CD8-positive, alpha-beta T cell (primary cell): ENCODE measurements at regions of chr7 and their contacts with region 1.

Region 1: DNA sequence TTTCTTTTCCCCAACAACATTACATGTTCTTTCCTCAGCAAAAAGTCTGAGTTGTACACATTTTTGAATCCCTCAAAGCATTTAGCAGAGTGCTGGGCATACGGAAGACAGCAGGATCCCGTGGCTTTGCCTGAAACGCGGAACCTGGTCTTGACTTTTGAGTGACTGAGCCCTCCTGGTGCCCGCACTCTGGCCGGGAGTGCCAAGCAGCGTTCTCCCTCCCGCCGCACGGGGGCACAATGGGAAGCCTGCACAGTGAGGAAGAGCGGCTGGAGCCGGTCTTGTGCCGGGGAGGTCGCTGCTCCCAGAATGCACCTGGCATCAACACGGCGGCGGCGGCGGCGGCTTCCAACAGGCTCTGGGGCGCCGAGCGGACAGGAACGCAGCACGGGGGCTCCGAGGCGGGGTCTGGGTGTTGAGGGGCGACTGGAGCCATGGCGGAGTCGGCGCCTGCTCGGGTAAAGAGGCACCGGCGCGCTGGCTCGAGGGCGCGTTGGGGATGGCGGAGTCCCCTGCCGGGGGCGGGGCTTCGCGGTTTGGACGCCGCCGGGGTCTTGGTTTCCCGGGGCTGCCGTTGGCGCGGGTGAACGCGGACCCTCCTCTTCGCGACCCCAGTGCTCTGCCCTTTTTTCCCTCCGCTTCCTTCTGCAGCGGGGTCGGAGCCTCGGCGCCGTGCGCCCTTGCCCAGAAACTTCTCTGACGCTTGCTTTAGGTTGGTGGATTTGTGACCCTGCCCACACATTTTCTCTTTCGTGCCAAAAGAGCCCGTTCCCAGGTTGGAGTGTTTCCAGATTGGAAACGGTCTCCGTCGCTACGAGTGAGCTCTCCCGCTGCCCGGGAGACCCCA is at the start of gene ZNF212:
- DNase-seq: peak; percentile 76 to 92 (median 89)
- ATAC-seq: peak; percentile 100
- H3K4me3 ChIP-seq: peak within 1 kb of the TSS; percentile 81 to 95
- H3K4me3 Mint-ChIP-seq: peak within 1 kb of the TSS; percentile 92
- H3K27ac ChIP-seq: peak within 1 kb of the TSS; percentile 41 to 67
- H3K27ac Mint-ChIP-seq: peak within 1 kb of the TSS; percentile 91
- H3K4me1 ChIP-seq: peaks cover 23% of the 10 kb centered on the region
- H3K4me1 Mint-ChIP-seq: peaks cover 34% of the 10 kb centered on the region
- H3K27me3 ChIP-seq: peaks cover 0 to 4% of the 10 kb centered on the region in 2 experiments
- H3K27me3 Mint-ChIP-seq: peaks cover 7% of the 10 kb centered on the region
- CTCF ChIP-seq: peak; percentile 85
- total RNA-seq, gene ZNF212: 20.9 to 22.1 TPM

Region 2: DNA sequence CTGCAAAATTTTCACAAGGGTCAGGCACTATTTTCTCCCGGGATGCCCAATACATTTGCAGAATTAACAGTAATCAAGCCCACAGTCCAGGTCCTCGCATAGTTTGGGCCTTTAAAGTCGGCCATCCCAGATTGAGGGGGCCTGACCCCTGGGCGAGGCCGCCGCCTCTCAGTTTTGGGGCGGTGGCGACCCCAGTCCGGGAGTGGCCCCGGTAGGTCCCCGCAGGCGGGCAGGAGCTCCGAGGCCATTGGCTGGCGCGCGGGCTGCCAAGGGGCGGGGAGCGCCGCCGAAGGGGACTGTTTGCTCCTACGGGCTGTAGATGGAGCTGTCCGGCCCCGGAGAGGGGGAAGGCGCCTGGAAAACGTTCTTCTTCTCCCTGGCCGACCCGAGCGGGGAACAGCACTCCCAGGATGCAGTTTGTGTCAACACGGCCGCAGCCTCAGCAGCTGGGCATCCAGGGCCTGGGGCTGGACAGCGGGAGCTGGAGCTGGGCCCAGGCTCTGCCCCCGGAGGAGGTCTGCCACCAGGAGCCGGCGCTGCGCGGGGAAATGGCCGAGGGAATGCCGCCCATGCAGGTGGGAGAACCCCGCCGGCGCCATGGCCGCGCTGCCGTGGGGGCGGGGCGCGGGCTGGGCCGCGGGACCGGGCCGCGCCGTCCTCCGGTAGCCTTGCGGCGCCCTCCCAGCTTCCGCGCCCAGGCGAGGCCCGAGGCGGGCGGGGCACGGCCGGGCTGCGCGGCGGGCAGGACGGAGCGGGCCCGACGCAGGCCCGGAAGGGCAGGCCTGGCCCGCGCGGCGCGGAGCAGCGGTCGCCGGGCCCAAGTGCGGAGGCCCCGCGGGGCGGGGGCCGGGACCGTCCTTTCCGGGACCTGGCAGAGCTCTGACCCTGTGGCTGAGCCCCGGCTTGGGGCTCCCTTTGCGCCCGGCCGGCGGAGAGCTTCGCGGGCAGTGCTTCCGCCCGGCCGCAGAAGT is 44.1 kb before region 1 on chr7 and contains the start of gene ZNF282:
- CTCF ChIA-PET with region 1: interaction called, 3 read pairs
- POLR2A ChIA-PET with region 1: interaction called, 3 read pairs
- intact Hi-C with region 1: loop called in 1 of 2 experiments (anchors 1 kb)
- DNase-seq: peak; percentile 31 to 80 (median 65)
- ATAC-seq: peak; percentile 78
- H3K4me3 ChIP-seq: peak within 1 kb of the TSS; percentile 83 to 84
- H3K4me3 Mint-ChIP-seq: peak within 1 kb of the TSS; percentile 86
- H3K27ac ChIP-seq: peak within 1 kb of the TSS; percentile 60 to 68
- H3K27ac Mint-ChIP-seq: peak within 1 kb of the TSS; percentile 84
- H3K4me1 ChIP-seq: peaks cover 17% of the 10 kb centered on the region
- H3K4me1 Mint-ChIP-seq: peaks cover 43% of the 10 kb centered on the region
- H3K27me3 ChIP-seq: no peaks in the 10 kb centered on the region
- H3K27me3 Mint-ChIP-seq: no peaks in the 10 kb centered on the region
- CTCF ChIP-seq: no peak
- total RNA-seq, gene ZNF282: 12.5 to 14.9 TPM

Region 3: DNA sequence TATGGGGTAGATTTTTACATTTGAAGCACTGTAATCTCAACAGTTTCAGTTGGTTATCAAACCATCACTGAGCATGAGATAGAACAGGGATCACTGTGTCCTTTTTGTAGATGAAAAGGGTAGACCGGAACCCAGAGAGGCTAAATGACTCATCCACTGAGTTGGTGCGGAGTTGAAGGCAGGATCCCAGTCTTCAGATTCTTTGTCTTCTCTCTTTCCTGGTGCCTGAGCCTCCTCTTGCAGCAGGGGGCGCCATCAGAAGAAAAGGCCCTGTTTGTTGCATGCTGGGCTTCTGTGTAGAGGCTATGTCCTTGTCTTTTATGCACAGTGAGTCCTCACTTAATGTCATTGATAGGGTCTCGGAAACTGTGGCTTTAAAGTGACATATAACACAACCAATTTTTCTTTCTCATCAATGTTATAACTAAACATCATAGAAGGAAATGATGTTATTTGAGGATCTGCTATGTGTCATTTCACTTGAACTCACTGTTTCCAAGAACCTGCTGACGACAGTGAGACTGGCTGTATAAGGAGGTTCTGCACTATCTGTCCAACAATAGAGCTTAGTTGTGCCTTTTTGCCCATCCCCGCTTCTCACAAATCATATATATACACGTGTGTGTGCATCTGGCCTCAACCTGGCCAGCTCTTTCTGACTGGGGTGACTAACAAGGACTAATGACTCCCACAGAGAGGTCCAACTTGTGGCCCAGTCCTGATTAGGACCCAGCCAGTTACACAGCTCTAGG is 29.9 kb before region 1 on chr7:
- CTCF ChIA-PET with region 1: no interaction called
- POLR2A ChIA-PET with region 1: no interaction called
- intact Hi-C with region 1: no loop called
- DNase-seq: peak; percentile 30 to 70 (median 59)
- ATAC-seq: peak; percentile 86
- H3K4me3 ChIP-seq: no peak overlapping the region
- H3K4me3 Mint-ChIP-seq: no peak overlapping the region
- H3K27ac ChIP-seq: no peak overlapping the region
- H3K27ac Mint-ChIP-seq: no peak overlapping the region
- H3K4me1 ChIP-seq: no peaks in the 10 kb centered on the region
- H3K4me1 Mint-ChIP-seq: peaks cover 5% of the 10 kb centered on the region
- H3K27me3 ChIP-seq: no peaks in the 10 kb centered on the region
- H3K27me3 Mint-ChIP-seq: no peaks in the 10 kb centered on the region
- CTCF ChIP-seq: peak; percentile 58

Region 4: DNA sequence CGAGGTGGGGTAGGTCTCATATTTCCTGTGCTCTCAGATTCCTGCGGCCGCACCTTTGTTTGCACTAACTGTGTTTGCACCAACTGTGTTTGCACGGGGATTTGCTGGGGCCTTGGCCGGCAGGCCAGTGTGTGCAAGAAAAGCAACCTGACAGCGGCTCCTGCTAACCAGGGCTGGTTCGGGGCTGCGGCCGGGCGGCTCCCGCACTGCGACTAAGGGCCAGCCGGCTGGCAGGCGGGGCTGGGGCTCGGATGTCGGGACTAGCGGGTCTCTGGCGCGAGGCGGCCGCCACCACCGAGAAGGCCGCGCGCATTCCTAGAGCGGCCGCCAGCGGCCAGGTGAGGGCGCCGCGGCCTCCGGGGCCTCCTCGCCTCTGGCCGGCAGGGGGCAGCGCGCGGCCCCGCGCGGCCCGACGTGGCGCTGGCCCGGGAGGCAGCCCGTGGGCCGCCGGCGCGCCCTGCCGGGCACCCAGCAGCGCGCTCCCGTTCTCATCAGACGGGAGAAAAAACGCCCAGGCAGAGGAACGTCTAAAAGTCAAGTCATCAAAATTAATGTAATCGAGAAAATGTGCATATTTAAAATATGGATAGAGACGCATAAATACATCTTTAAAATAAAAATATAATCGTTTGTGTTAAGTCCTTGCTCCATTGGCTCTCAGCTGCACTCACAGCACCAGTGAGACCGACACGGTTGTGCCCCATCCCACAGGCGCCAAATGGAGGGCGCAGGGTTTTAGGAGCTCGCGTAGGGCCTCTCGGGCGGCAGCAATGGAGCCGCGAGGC is 182.8 kb after region 1 on chr7:
- CTCF ChIA-PET with region 1: no interaction called
- POLR2A ChIA-PET with region 1: no interaction called
- intact Hi-C with region 1: loop called (anchors 1 to 2 kb)
- DNase-seq: peak; percentile 50 to 91 (median 66)
- ATAC-seq: peak; percentile 97
- H3K4me3 ChIP-seq: peak overlapping the region; percentile 71 to 76
- H3K4me3 Mint-ChIP-seq: peak overlapping the region; percentile 76
- H3K27ac ChIP-seq: peak overlapping the region; percentile 60 to 82
- H3K27ac Mint-ChIP-seq: peak overlapping the region; percentile 75
- H3K4me1 ChIP-seq: peaks cover 5% of the 10 kb centered on the region
- H3K4me1 Mint-ChIP-seq: peaks cover 12% of the 10 kb centered on the region
- H3K27me3 ChIP-seq: no peaks in the 10 kb centered on the region
- H3K27me3 Mint-ChIP-seq: no peaks in the 10 kb centered on the region
- CTCF ChIP-seq: no peak

Region 5: DNA sequence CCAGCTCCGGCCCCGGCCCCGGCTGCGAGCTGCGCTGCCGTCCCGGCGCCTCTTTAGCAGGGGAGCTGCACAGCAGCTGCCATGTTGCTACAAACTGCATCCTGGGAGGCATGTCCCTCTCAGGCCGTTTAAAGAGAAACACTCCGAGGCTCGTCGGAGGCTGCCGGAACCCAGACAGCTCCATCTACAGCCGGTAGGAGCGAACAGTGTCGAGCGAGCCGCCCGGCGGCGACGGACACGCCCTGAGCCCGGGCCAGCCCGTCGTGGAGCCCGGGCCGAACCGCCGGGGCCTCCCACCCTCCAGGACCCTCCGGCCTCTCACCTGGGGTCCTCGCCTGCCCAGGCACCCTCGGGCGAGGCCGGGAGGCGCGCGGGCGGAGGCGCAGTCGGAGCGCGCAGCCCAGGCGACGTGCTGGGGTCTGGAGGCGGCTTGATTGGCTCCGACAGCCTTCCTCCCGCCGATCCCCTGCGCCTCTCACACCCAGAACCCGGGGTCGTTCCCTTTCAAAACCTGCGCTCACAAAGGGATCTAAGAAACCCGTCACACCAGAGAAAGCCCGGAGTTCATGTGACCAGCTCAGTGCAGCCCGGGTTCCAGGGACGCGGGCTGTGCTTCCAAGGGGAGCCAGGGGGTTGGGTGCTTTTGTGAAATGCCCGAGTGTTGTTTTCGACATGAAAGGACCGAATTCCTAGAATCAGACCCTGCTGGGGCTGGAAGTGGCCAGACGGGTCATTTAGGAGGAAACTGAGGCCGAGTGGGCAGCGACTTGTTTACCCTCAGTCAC is 221.1 kb after region 1 on chr7 and contains the start of gene ZNF777:
- CTCF ChIA-PET with region 1: no interaction called
- POLR2A ChIA-PET with region 1: no interaction called
- intact Hi-C with region 1: loop called in 1 of 2 experiments (anchors 1 kb)
- DNase-seq: peak; percentile 66 to 90 (median 81)
- ATAC-seq: peak; percentile 97
- H3K4me3 ChIP-seq: peak within 1 kb of the TSS; percentile 69 to 74
- H3K4me3 Mint-ChIP-seq: peak within 1 kb of the TSS; percentile 88
- H3K27ac ChIP-seq: peak within 1 kb of the TSS; percentile 55 to 69
- H3K27ac Mint-ChIP-seq: peak within 1 kb of the TSS; percentile 72
- H3K4me1 ChIP-seq: peaks cover 24% of the 10 kb centered on the region
- H3K4me1 Mint-ChIP-seq: peaks cover 33% of the 10 kb centered on the region
- H3K27me3 ChIP-seq: no peaks in the 10 kb centered on the region
- H3K27me3 Mint-ChIP-seq: peaks cover 10% of the 10 kb centered on the region
- CTCF ChIP-seq: peak; percentile 57
- total RNA-seq, gene ZNF777: 21.0 to 22.2 TPM